ENCODE measurements at regions of chr2 and their contacts with region 1.

Region 1: GRCh38 chr2:20446917-20447436 is at the start of gene RHOB:
- DNase-seq: peak; percentile 98
- ATAC-seq: peak; percentile 82
- H3K4me3 ChIP-seq: peak within 1 kb of the TSS; percentile 78 to 97 (median 89)
- H3K27ac ChIP-seq: peak within 1 kb of the TSS; percentile 92
- H3K4me1 ChIP-seq: peaks cover 60% of the 10 kb centered on the region
- H3K27me3 ChIP-seq: no peaks in the 10 kb centered on the region; a peak in 1 of 5 replicates
- CTCF ChIP-seq: no peak
- EP300 ChIP-seq: peak; percentile 35 to 54; a peak in 1 of 4 replicates
- POLR2A ChIP-seq: peak; percentile 100
- RAD21 ChIP-seq: peak; percentile 65
- total RNA-seq, gene RHOB: 192 and 268 TPM in 2 replicates

Region 2: DNA sequence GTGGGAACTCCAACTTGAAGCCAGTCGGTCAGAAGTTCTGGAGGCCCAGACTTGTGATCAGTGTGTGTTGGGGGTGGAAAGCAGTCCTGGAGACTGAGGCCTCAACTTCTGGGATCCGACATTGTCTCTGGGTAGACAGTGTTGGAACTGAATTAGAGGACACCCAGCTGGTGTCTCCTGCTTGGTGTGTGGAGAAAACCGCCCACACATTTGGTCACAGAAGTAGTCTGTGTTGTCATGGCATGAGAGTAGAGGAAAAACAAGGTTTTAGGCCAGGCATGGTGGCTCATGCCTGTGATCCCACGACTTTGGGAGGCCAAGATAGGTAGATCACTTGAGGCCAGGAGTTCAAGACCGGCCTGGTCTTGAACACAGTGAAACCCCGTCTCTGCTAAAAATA is 147.9 kb before region 1 on chr2:
- CTCF ChIA-PET with region 1: no interaction called
- POLR2A ChIA-PET with region 1: no interaction called
- in situ Hi-C with region 1: no loop called
- intact Hi-C with region 1: no loop called
- DNase-seq: no peak
- ATAC-seq: no peak; the same call in 2 of the 3 replicates
- H3K4me3 ChIP-seq: no peak overlapping the region
- H3K27ac ChIP-seq: no peak overlapping the region
- H3K4me1 ChIP-seq: no peaks in the 10 kb centered on the region
- H3K27me3 ChIP-seq: no peaks in the 10 kb centered on the region
- CTCF ChIP-seq: no peak
- EP300 ChIP-seq: no peak
- POLR2A ChIP-seq: no peak
- RAD21 ChIP-seq: no peak

Region 3: DNA sequence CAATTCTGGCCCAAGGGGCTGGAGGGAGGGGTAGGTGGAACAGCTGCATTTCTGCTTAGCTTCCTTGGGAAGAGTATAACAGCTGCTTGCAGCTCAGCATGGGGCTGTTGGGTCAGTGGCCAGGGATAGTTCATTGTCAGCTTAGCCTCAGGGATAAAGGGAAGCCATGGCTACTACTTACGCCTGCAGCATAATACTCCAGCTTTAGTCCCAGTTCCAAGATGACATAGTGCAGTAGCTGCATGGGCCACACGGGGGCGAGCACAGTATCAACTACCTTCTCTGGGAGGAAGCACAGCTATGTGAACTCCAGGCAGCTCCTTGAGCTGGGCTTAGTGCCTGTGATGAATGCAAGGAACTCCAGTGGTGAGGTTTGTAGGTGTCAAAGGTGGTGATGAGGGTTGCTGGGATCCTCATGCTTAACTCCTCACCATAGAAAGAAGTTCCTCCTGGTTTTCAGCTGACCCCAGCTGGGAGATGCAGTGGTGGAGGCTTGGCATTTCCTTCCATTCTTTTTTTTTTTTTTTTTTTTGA is 35.5 kb before region 1 on chr2:
- CTCF ChIA-PET with region 1: interaction called, 10 read pairs
- POLR2A ChIA-PET with region 1: interaction called, 190 read pairs
- in situ Hi-C with region 1: no loop called
- intact Hi-C with region 1: loop called (anchors 1 kb)
- DNase-seq: peak; percentile 79
- ATAC-seq: peak; percentile 99
- H3K4me3 ChIP-seq: no peak overlapping the region
- H3K27ac ChIP-seq: no peak overlapping the region
- H3K4me1 ChIP-seq: peaks cover 36% of the 10 kb centered on the region
- H3K27me3 ChIP-seq: no peaks in the 10 kb centered on the region; a peak in 1 of 5 replicates
- CTCF ChIP-seq: peak; percentile 97
- EP300 ChIP-seq: no peak
- POLR2A ChIP-seq: no peak
- RAD21 ChIP-seq: peak; percentile 86

Region 4: DNA sequence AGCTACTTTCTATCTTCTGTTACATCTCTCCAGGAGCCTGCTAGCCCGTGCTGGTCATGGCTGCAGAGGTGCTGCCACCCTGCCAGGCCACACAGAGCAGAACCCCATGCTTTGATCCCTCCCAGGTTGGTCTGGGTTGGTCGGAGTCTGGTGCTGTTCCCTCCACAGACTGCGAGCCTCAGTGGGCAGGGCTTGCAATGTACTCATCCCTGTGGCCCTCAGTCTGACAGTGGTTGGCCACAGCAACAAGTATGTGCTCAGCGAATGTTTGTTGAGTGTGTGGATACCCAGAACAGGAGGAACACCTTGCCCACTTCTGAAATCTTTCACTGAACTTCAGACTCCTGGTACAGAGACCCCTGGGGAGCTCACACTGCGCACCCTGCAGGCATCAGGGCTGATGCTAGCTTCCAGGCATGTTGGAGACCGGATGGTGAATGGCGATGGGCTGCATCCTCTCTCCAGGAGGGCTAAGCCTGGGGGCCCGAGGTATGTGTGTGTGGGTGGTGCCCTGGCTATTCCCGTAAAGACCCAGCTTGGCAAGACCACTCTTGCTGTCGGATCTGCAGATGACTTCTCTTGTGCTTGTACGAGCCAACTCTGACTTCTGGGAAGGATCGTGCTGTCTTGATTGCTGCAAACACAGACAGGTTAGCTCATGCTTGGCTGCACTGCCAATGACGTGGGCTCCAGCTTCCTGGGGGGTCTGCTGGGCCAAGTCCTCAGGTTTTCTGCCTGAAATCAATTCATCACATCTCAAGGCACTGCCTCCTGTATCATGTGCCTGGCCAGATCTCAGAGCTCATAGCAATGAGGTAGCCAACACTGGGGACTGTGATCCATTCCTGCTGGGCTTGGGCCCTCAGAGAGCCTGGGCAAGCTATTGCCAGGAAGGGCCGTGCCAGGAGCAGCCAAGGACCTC is 43.5 kb after region 1 on chr2:
- CTCF ChIA-PET with region 1: no interaction called
- POLR2A ChIA-PET with region 1: interaction called, 97 read pairs
- in situ Hi-C with region 1: loop called (anchors 5 kb)
- intact Hi-C with region 1: no loop called
- DNase-seq: no peak
- ATAC-seq: peak; percentile 7; the same call in 2 of the 3 replicates
- H3K4me3 ChIP-seq: no peak overlapping the region
- H3K27ac ChIP-seq: no peak overlapping the region
- H3K4me1 ChIP-seq: peaks cover 74% of the 10 kb centered on the region
- H3K27me3 ChIP-seq: peaks cover 1 to 27% of the 10 kb centered on the region in 2 experiments; a peak in 1 of 5 replicates
- CTCF ChIP-seq: no peak
- EP300 ChIP-seq: no peak
- POLR2A ChIP-seq: no peak
- RAD21 ChIP-seq: no peak

Region 5: DNA sequence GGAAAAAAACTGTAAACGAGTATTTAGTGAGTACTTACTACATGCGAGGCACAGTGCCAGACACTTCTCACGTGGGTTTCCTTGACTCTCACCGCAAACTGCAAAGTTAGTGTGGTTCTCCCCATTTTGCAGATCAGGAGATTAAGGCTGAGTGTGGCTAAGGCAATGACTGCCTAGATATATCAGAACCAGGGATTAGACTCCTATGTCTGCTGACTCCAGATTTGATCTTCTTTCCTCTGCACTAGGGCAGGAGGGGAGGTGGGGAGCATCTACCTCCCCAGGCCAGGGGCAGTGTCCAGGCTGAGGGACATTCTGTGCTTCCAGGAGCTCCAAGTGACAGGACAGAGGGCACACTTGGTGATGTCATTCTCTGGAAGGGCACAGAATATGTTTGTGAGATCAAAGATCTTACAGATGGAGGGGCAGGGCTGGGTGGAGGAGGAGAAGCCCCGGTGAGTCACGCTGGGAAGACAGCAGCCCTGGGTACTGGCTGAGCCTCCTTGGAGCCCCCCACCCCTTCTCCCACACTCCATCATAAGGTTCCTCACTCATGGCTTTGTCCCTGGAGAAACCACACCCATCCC is 92.2 kb after region 1 on chr2:
- CTCF ChIA-PET with region 1: no interaction called
- POLR2A ChIA-PET with region 1: interaction called, 268 read pairs
- in situ Hi-C with region 1: loop called (anchors 5 kb)
- intact Hi-C with region 1: loop called (anchors 1 kb)
- DNase-seq: peak; percentile 67
- ATAC-seq: peak; percentile 1
- H3K4me3 ChIP-seq: peak overlapping the region in 1 of 3 experiments; percentile 59; a peak in 1 of 6 replicates
- H3K27ac ChIP-seq: peak overlapping the region; percentile 97
- H3K4me1 ChIP-seq: peaks cover 82% of the 10 kb centered on the region
- H3K27me3 ChIP-seq: no peaks in the 10 kb centered on the region
- CTCF ChIP-seq: no peak
- EP300 ChIP-seq: no peak
- POLR2A ChIP-seq: no peak
- RAD21 ChIP-seq: no peak

Region 6: GRCh38 chr2:20611077-20611843 is 164.3 kb after region 1 on chr2:
- CTCF ChIA-PET with region 1: no interaction called
- POLR2A ChIA-PET with region 1: interaction called, 1,537 read pairs
- in situ Hi-C with region 1: no loop called
- intact Hi-C with region 1: no loop called
- DNase-seq: peak; percentile 100
- ATAC-seq: peak; percentile 94
- H3K4me3 ChIP-seq: peak overlapping the region in 1 of 3 experiments; percentile 35; a peak in 3 of 6 replicates
- H3K27ac ChIP-seq: peak overlapping the region; percentile 95
- H3K4me1 ChIP-seq: peaks cover 78% of the 10 kb centered on the region
- H3K27me3 ChIP-seq: no peaks in the 10 kb centered on the region
- CTCF ChIP-seq: peak; percentile 15; the same call in 1 of the 2 replicates
- EP300 ChIP-seq: peak; percentile 92 to 97
- POLR2A ChIP-seq: peak in 1 of 2 experiments; percentile 81; a peak in 2 of 4 replicates
- RAD21 ChIP-seq: peak; percentile 57

Region 7: GRCh38 chr2:20650880-20651730 is 204.1 kb after region 1 on chr2 and contains the start of gene HS1BP3:
- CTCF ChIA-PET with region 1: no interaction called
- POLR2A ChIA-PET with region 1: interaction called, 51 read pairs
- in situ Hi-C with region 1: no loop called
- intact Hi-C with region 1: no loop called
- DNase-seq: peak; percentile 67
- ATAC-seq: peak; percentile 94
- H3K4me3 ChIP-seq: peak within 1 kb of the TSS; percentile 75 to 95 (median 81)
- H3K27ac ChIP-seq: peak within 1 kb of the TSS; percentile 60
- H3K4me1 ChIP-seq: peaks cover 58% of the 10 kb centered on the region
- H3K27me3 ChIP-seq: peaks cover 1 to 12% of the 10 kb centered on the region in 2 experiments; a peak in 4 of 5 replicates
- CTCF ChIP-seq: peak; percentile 89
- EP300 ChIP-seq: 0 out of 4 replicates have a peak, but pooled peaks of 1 of the 2 experiments have one; percentile 11
- POLR2A ChIP-seq: peak in 1 of 2 experiments; percentile 53; a peak in 1 of 4 replicates
- RAD21 ChIP-seq: peak; percentile 98
- total RNA-seq, gene HS1BP3: 22.0 and 22.8 TPM in 2 replicates